ENCODE measurements at regions of chr7 and their contacts with region 1.

Region 1: GRCh38 chr7:13117103-13117502 is 429.7 kb downstream of the ARL4A start:
- DNase-seq: no peak
- ATAC-seq: peak; percentile 76 to 90 (median 86)
- H3K4me3 ChIP-seq: no peak overlapping the region
- H3K27ac ChIP-seq: no peak overlapping the region
- H3K4me1 ChIP-seq: no peaks in the 10 kb centered on the region
- H3K27me3 ChIP-seq: no peaks in the 10 kb centered on the region
- CTCF ChIP-seq: peak; percentile 53 to 68 (median 62)
- POLR2A ChIP-seq: no peak

Region 2: DNA sequence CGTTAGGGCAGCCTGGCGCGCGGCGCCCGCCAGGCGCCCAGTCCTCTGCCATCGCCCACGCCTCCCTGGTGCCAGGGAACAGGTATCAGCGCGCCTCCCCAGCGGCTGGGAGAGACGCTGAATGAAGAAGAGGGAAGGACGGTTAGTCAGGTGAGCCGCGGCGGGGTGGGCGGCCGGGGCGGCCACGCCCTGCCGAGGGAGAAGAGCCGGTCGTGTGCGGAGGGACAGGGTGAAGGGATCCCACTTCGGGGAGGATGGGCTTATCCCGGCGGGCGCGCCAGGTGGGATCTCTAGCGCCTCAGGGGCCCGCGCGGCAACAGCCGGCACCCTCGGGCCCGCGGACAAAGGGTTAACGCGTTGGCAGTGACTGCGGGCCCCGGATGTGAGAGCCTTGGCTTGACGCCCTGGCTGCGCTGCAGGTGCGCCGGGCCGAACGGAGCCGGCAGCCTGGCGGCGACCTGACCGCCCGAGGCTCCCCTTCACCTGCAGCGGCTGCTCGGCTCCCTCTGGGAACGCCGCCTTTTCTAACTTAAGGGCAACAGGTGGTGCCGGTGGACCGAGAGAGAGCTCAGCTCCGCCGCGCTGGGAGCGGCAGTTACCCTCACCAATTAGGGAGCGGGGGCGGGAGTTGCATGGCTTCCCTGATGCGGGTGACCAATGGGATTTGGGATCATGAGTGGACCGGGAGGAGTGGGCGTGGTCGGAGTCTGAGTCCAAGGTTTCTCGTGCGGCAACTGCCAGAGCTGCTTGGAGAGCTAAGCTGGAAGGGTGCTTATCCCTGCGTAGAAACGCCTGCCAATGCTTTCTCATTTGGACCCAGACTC is 430.0 kb before region 1 on chr7 and contains the start of gene ARL4A:
- intact Hi-C with region 1: loop called in 1 of 2 experiments (anchors 10 kb)
- DNase-seq: peak; percentile 99
- ATAC-seq: peak; percentile 91 to 96 (median 92)
- H3K4me3 ChIP-seq: peak within 1 kb of the TSS; percentile 83 to 97 (median 88)
- H3K27ac ChIP-seq: peak within 1 kb of the TSS; percentile 79 to 90 (median 89)
- H3K4me1 ChIP-seq: peaks cover 0 to 4% (median 0%) of the 10 kb centered on the region in 4 donors
- H3K27me3 ChIP-seq: no peaks in the 10 kb centered on the region
- CTCF ChIP-seq: peak in 3 of 4 donors; percentile 21 to 37 (median 29)
- POLR2A ChIP-seq: peak; percentile 93
- total RNA-seq, gene ARL4A: 4.4 to 19.2 (median 8.3) TPM

Region 3: DNA sequence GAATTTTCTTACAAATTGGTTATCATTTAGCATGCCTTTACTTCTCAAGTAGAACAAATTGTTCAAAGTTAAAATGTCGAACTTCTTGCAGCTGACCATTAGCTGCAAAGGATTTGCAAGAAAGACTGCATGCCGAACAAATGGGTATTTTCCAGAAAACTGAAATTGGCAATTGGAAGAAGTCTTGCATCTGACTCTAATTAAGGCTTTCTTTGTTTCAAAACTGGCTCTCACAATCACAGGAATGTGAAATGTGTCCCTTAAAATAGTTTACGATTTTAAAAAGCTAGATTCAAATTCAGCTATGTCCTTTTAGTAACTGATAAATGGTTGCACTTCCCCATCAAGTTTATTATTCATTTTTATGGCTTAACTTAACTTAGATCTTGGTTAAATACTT is 221.8 kb before region 1 on chr7:
- intact Hi-C with region 1: no loop called
- DNase-seq: no peak
- ATAC-seq: no peak
- H3K4me3 ChIP-seq: no peak overlapping the region
- H3K27ac ChIP-seq: no peak overlapping the region
- H3K4me1 ChIP-seq: no peaks in the 10 kb centered on the region
- H3K27me3 ChIP-seq: no peaks in the 10 kb centered on the region
- CTCF ChIP-seq: no peak
- POLR2A ChIP-seq: no peak

Measured in right lobe of liver (tissue), 6 donors.